ENCODE measurements at regions of chr2 and their contacts with region 1.

Region 1: GRCh38 chr2:168712049-168712448 is 90.4 kb upstream of the NOSTRIN start:
- DNase-seq: no peak
- ATAC-seq: peak; percentile 97
- H3K4me3 Mint-ChIP-seq: peak overlapping the region; percentile 32
- H3K27ac Mint-ChIP-seq: peak overlapping the region; percentile 72
- H3K4me1 Mint-ChIP-seq: peaks cover 20% of the 10 kb centered on the region
- H3K27me3 Mint-ChIP-seq: no peaks in the 10 kb centered on the region
- CTCF ChIP-seq: no peak

Region 2: GRCh38 chr2:168231609-168232241 is 480.3 kb before region 1 on chr2:
- CTCF ChIA-PET with region 1: no interaction called
- POLR2A ChIA-PET with region 1: no interaction called
- intact Hi-C with region 1: no loop called
- DNase-seq: no peak
- ATAC-seq: no peak
- H3K4me3 Mint-ChIP-seq: no peak overlapping the region
- H3K27ac Mint-ChIP-seq: no peak overlapping the region
- H3K4me1 Mint-ChIP-seq: peaks cover 5% of the 10 kb centered on the region
- H3K27me3 Mint-ChIP-seq: no peaks in the 10 kb centered on the region
- CTCF ChIP-seq: no peak

Region 3: DNA sequence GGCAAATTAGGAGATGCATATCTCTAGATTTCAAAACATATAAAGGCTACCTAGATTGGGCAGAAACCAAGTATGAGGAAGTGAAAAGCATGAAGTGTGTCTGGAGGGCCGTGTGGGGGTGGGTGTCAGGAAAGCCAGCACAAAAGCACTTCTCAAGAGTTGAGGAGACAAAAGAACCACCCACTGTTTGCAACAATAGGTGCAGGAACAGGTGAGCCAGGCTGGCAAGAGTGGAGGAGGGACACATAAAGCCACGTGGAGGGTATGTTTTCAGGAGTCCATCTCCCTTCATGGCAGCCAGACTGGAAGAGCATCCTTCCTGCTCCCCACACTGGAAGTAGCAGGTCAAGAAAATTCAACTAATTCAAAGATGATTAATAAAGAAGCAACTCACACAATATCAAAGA is 159.6 kb before region 1 on chr2:
- CTCF ChIA-PET with region 1: no interaction called
- POLR2A ChIA-PET with region 1: no interaction called
- intact Hi-C with region 1: no loop called
- DNase-seq: no peak
- ATAC-seq: peak; percentile 84
- H3K4me3 Mint-ChIP-seq: peak overlapping the region; percentile 19
- H3K27ac Mint-ChIP-seq: peak overlapping the region; percentile 47
- H3K4me1 Mint-ChIP-seq: peaks cover 24% of the 10 kb centered on the region
- H3K27me3 Mint-ChIP-seq: no peaks in the 10 kb centered on the region
- CTCF ChIP-seq: no peak

Region 4: DNA sequence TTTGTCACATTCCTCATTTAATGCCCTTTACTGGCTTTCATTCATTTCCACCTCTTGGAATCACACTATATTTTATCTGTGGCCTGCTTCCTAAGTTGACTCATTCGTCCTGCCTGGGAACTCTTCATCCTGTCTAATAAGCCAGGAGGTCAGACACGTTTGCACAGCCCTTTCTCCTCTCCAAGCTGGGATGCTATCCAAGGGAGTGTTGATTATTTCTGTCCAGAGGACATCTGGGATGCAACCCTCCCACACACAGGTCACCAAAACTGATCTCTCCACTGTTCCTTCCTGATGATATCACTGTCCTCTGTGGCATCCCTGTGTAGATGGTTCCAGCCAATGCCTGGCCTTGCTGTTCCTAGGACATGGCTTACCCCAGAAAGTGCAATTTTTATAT is 10.5 kb after region 1 on chr2:
- CTCF ChIA-PET with region 1: no interaction called
- POLR2A ChIA-PET with region 1: no interaction called
- intact Hi-C with region 1: loop called (anchors 1 kb)
- DNase-seq: no peak
- ATAC-seq: no peak
- H3K4me3 Mint-ChIP-seq: no peak overlapping the region
- H3K27ac Mint-ChIP-seq: peak overlapping the region; percentile 1
- H3K4me1 Mint-ChIP-seq: peaks cover 15% of the 10 kb centered on the region
- H3K27me3 Mint-ChIP-seq: no peaks in the 10 kb centered on the region
- CTCF ChIP-seq: no peak

Region 5: DNA sequence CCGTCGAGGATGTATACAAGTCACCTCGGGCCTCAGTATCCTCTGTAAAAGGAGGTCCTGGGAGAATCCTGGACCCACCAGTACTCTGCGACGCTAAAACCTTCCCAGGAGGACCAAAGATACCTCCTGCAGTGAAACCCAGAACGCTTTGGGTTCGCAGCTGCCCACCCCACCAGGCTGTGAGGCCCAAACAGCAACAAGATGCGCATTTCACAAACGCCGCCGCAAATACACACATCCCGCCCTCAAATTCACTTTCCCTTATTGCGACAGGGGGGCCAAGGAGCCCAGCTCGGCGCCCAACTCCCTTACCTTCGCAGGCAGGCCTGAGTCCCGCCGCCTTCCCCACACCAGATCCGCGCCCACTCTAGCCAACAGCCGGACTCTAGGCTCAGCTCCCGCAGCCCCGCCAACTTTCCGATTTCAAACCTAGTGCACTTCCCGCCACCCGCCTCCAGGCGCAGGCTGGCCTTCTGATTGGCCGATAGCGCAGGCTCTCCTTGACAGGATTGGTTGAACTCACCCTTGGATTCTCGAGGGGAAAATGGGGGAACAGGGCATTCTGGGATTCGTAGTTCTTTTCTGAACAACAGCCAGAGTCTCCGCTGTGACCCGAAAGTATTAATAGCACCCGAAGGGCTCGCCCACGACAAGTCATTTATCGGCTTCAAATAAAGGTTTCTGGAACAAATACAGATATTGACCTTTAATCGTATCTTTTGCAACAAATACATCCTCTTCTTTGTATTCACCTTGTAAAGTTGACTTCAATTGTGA is 178.1 kb after region 1 on chr2 and contains the start of gene SPC25:
- CTCF ChIA-PET with region 1: no interaction called
- POLR2A ChIA-PET with region 1: no interaction called
- intact Hi-C with region 1: loop called (anchors 10 kb)
- DNase-seq: peak; percentile 73
- ATAC-seq: peak; percentile 100
- H3K4me3 Mint-ChIP-seq: peak within 1 kb of the TSS; percentile 91
- H3K27ac Mint-ChIP-seq: no peak within 1 kb of the TSS
- H3K4me1 Mint-ChIP-seq: peaks cover 11% of the 10 kb centered on the region
- H3K27me3 Mint-ChIP-seq: peaks cover 5% of the 10 kb centered on the region
- CTCF ChIP-seq: no peak
- total RNA-seq, gene SPC25: 0.18 and 0.95 TPM in 2 replicates

Region 6: DNA sequence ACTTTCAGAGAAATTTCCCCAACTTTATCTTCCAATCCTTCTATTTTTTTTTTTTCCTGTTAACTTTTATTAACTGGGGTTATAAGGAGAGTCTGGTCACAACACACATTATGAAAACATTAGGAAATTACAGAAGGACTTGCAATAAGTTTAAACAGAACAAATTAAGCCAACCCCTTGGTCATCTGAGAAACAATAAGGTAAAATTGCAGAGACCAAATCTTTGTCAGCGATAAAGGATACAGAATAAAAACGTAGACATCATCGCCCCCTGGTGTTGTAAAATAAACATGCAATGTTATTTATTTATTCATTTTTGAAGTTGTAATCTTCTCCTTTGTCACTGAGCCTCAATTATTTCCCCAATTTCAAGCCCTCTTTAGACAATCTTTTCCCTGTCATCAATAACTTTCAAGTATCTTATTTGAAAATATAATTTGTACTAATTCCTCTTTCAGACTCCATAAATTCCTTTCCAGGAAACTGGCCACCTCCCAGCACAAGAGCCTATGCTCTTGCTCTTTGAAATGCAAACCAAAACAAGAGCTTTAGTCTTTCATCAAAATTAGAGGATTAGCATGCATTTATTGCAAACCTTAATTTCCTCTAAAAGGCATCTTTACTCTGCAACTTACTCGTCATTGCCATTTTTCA is 208.6 kb after region 1 on chr2:
- CTCF ChIA-PET with region 1: no interaction called
- POLR2A ChIA-PET with region 1: no interaction called
- intact Hi-C with region 1: loop called (anchors 10 kb)
- DNase-seq: no peak
- ATAC-seq: no peak
- H3K4me3 Mint-ChIP-seq: no peak overlapping the region
- H3K27ac Mint-ChIP-seq: no peak overlapping the region
- H3K4me1 Mint-ChIP-seq: no peaks in the 10 kb centered on the region
- H3K27me3 Mint-ChIP-seq: peaks cover 10% of the 10 kb centered on the region
- CTCF ChIP-seq: peak; percentile 50

Measured in activated B cell treated with CpG ODN at 0.5 μM for 24 hours (primary cell).